ENCODE measurements at regions of chr2 and their contacts with region 1.

Region 1: DNA sequence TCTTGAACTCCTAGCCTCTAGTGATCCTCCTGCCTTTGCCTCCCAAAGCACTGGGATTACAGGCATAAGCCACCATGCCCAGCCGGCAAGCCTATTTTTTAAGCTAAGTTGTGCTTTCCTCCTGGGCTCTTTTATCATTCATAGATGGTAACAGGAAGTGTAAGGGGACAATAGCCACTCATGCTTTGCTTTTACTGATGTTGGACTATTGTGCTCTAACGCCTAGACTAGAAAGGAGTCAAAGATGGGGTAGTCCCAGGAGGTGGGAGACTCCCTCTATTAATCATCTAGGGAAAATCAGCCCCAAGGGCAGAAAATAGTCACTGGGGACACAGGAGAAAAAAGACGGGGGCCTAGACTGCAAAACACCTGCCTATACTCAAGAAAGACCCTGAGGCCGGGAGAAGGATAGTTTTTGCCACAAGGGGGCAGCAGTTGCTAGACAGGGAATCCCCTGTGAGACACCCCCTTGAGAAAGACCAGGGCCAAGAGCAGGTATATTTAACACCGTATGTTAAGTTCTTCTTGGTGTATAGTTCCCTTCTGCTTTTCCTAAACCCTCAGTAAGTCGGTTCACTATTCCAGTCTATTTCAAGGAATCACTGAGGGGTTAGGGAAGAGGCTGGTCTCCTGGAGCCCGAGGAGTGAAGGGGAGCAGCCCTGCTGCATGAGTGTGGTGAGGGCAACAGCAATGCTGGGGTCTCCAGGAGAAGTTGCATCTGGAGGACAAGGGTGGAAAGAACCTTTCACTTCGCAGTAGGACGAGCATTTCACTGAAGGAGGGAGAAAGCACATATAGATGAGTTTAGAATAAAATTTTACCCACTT is 2.1 kb upstream of the CXCR1 start:
- H3K4me3 Mint-ChIP-seq: no peak overlapping the region
- H3K27ac Mint-ChIP-seq: no peak overlapping the region
- H3K4me1 Mint-ChIP-seq: peaks cover 64% of the 10 kb centered on the region
- H3K27me3 Mint-ChIP-seq: peaks cover 3% of the 10 kb centered on the region

Region 2: GRCh38 chr2:216519154-216519762 is 1649.6 kb before region 1 on chr2:
- intact Hi-C with region 1: no loop called
- H3K4me3 Mint-ChIP-seq: no peak overlapping the region
- H3K27ac Mint-ChIP-seq: no peak overlapping the region
- H3K4me1 Mint-ChIP-seq: no peaks in the 10 kb centered on the region
- H3K27me3 Mint-ChIP-seq: peaks cover 1% of the 10 kb centered on the region

Region 3: DNA sequence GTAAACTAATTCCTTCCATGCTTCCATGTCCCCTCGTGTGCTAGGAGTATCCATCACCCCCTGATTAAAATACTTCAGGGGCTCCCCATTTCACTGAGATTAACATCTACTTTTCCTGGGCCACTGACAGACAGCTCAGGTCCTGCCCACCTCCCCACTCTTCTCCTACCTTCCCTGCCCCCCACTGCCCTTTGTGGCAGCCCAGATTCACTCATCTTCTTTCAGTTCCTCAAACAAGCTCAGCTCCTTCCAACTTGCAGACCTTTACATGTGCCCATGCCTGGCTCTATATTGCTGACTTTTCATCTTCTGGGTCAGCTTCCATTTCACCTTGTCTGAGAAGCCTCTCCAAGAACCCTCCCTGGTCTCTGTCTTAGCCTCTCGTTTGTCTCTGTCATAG is 87.8 kb before region 1 on chr2:
- intact Hi-C with region 1: loop called (anchors 10 kb)
- H3K4me3 Mint-ChIP-seq: peak overlapping the region; percentile 37
- H3K27ac Mint-ChIP-seq: peak overlapping the region; percentile 85
- H3K4me1 Mint-ChIP-seq: peaks cover 86% of the 10 kb centered on the region
- H3K27me3 Mint-ChIP-seq: no peaks in the 10 kb centered on the region

Region 4: DNA sequence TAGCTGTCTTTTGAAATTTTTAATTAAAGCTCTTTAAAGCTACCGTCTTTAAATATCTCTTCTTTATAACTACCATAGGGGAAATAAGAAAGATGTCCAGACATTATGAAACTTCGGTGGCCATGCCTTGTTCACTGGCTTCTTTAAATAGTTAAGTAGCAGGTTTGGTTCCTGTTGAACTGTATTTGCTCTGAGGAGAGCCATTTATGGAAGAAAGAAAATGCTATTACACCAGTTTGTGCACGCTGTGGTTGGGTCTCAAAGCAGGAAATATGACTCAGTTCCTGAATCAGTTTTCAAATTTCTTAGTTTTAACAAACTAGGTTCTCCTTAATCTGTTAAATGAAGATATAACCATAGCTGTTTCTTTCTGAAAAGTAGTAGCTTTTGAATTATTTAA is 60.4 kb after region 1 on chr2:
- intact Hi-C with region 1: no loop called
- H3K4me3 Mint-ChIP-seq: peak overlapping the region; percentile 40
- H3K27ac Mint-ChIP-seq: peak overlapping the region; percentile 48
- H3K4me1 Mint-ChIP-seq: peaks cover 73% of the 10 kb centered on the region
- H3K27me3 Mint-ChIP-seq: no peaks in the 10 kb centered on the region

Region 5: GRCh38 chr2:218471982-218472381 is 303.1 kb after region 1 on chr2:
- intact Hi-C with region 1: no loop called
- H3K4me3 Mint-ChIP-seq: no peak overlapping the region
- H3K27ac Mint-ChIP-seq: peak overlapping the region; percentile 43
- H3K4me1 Mint-ChIP-seq: peaks cover 31% of the 10 kb centered on the region
- H3K27me3 Mint-ChIP-seq: no peaks in the 10 kb centered on the region

Measured in dendritic cell treated with granulocyte-macrophage colony-stimulating factor and Interleukin-4, amounts not matched to agents 40 ng/mL and 50 ng/mL, for 4 days (primary cell).